CD4-positive, alpha-beta memory T cell (primary cell): ENCODE measurements at regions of chr6 and their contacts with region 1.

Region 1: DNA sequence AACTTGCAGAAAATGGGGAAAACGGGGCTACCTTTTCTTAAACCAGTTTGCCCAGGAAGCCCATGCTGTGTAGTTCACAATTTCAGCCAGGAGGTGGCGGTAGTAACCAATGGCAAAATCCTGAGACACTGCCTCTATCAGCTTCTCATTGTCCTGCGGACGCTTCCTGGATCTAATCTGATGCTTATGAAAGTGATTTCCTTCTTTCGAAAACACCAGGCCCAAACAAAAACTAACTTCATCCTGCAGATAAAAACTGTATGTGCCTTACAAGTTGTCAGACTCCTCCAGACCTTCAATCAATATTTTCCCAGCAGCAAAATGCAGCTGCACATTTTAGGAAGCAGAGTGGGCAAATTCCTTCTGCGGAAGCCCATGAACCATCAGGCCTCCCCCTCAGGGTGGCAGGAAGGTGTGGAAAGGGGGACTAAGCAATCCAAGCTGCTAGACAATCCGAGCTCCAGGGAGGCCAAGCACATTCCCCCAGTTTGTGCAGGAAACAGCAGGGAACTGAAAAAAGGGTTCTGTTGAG is 88.5 kb downstream of the LY86 start:
- DNase-seq: peak; percentile 64 to 75 (median 68)
- H3K4me3 ChIP-seq: no peak overlapping the region
- H3K4me3 Mint-ChIP-seq: peak overlapping the region in 3 of 8 donors; percentile 27 to 50 (median 41)
- H3K27ac ChIP-seq: no peak overlapping the region
- H3K27ac Mint-ChIP-seq: peak overlapping the region in 5 of 7 donors; percentile 47 to 83 (median 53)
- H3K4me1 ChIP-seq: peaks cover 8% of the 10 kb centered on the region
- H3K4me1 Mint-ChIP-seq: peaks cover 5 to 11% (median 7%) of the 10 kb centered on the region in 4 donors
- H3K27me3 ChIP-seq: no peaks in the 10 kb centered on the region
- H3K27me3 Mint-ChIP-seq: peaks cover 1 to 2% of the 10 kb centered on the region in 2 donors

Region 2: DNA sequence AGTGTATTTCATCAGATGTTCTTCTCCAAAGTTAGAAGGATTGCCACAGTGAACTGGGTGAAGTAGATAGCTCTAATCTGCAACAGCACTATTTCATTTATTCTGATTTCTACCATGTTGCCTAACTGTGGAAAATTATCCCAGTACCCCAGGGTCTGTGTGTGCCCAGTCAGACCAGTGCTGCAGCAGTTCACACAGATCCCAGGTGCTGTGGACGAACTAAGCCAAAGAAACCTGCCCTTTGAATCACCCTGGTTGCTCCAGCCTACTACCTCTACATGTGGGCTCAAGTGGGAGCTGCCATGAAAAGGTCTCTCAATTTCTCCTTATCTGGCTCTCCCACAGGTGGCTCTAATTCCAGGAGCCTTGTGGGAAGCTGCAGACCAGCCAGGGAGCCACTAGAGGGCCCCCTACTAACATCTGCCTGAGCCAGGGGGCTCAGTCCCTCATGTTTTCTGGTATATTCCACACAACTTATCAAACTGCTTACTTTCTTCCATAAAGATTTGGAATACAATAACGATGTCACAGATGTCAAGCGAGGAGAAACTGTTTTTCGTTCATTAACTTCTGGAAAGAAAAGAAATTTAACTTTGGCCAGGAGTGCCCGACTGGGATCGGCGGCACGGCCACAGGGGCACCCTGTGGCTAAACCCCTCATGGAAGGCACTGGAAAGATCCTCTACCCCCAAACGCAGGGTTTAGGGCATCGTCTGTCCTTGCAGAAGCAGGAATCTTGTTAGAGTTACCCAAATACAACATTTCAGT is 120.1 kb before region 1 on chr6:
- CTCF ChIA-PET with region 1: interaction called, 5 read pairs
- POLR2A ChIA-PET with region 1: no interaction called
- intact Hi-C with region 1: loop called (anchors 2 kb)
- DNase-seq: peak; percentile 26 to 53 (median 44)
- H3K4me3 ChIP-seq: no peak overlapping the region
- H3K4me3 Mint-ChIP-seq: no peak overlapping the region
- H3K27ac ChIP-seq: no peak overlapping the region
- H3K27ac Mint-ChIP-seq: peak overlapping the region in 3 of 7 donors; percentile 26 to 67 (median 34)
- H3K4me1 ChIP-seq: no peaks in the 10 kb centered on the region
- H3K4me1 Mint-ChIP-seq: peaks cover 1 to 6% (median 4%) of the 10 kb centered on the region in 4 donors
- H3K27me3 ChIP-seq: no peaks in the 10 kb centered on the region
- H3K27me3 Mint-ChIP-seq: peaks cover 1 to 4% of the 10 kb centered on the region in 2 donors

Region 3: DNA sequence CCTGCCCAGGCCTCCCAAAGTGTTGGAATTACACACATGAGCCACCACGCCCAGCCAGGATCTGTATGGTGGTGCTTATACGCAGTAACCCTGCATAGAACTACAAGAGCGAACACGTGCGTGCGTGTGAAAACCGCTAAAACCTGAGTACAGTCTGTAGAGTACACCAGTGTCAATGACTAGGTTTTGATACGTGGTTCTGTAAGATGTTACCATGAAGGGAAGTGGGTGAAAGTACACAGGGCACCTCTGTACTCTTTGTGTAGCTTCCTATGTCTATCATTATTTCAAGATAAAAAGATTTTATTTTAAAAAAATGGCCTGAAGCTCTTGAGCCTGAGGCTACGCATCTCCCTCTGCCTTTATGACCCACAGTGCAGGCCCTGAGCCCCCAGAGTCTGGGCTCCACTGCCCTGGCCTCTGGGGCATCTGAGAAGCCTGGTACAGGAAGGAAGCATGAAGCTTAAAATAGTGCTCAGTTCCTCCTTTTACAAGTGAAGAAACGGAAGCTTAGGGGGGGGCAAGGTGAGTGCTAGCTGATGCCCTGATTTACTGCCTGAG is 66.9 kb before region 1 on chr6:
- CTCF ChIA-PET with region 1: interaction called, 3 read pairs
- POLR2A ChIA-PET with region 1: interaction called, 5 read pairs
- intact Hi-C with region 1: loop called (anchors 1 kb)
- DNase-seq: peak; percentile 61 to 72 (median 64)
- H3K4me3 ChIP-seq: no peak overlapping the region
- H3K4me3 Mint-ChIP-seq: peak overlapping the region in 7 of 8 donors; percentile 53 to 73 (median 61)
- H3K27ac ChIP-seq: peak overlapping the region; percentile 15
- H3K27ac Mint-ChIP-seq: peak overlapping the region; percentile 81 to 98 (median 95)
- H3K4me1 ChIP-seq: peaks cover 67% of the 10 kb centered on the region
- H3K4me1 Mint-ChIP-seq: peaks cover 42 to 74% (median 57%) of the 10 kb centered on the region in 4 donors
- H3K27me3 ChIP-seq: no peaks in the 10 kb centered on the region
- H3K27me3 Mint-ChIP-seq: no peaks in the 10 kb centered on the region

Region 4: GRCh38 chr6:6661684-6662083 is 15.3 kb before region 1 on chr6:
- CTCF ChIA-PET with region 1: interaction called, 17 read pairs
- POLR2A ChIA-PET with region 1: no interaction called
- intact Hi-C with region 1: no loop called
- DNase-seq: no peak
- H3K4me3 ChIP-seq: no peak overlapping the region
- H3K4me3 Mint-ChIP-seq: no peak overlapping the region
- H3K27ac ChIP-seq: no peak overlapping the region
- H3K27ac Mint-ChIP-seq: no peak overlapping the region
- H3K4me1 ChIP-seq: peaks cover 24% of the 10 kb centered on the region
- H3K4me1 Mint-ChIP-seq: peaks cover 0 to 38% (median 27%) of the 10 kb centered on the region in 4 donors
- H3K27me3 ChIP-seq: no peaks in the 10 kb centered on the region
- H3K27me3 Mint-ChIP-seq: peaks cover 3 to 7% of the 10 kb centered on the region in 2 donors

Region 5: DNA sequence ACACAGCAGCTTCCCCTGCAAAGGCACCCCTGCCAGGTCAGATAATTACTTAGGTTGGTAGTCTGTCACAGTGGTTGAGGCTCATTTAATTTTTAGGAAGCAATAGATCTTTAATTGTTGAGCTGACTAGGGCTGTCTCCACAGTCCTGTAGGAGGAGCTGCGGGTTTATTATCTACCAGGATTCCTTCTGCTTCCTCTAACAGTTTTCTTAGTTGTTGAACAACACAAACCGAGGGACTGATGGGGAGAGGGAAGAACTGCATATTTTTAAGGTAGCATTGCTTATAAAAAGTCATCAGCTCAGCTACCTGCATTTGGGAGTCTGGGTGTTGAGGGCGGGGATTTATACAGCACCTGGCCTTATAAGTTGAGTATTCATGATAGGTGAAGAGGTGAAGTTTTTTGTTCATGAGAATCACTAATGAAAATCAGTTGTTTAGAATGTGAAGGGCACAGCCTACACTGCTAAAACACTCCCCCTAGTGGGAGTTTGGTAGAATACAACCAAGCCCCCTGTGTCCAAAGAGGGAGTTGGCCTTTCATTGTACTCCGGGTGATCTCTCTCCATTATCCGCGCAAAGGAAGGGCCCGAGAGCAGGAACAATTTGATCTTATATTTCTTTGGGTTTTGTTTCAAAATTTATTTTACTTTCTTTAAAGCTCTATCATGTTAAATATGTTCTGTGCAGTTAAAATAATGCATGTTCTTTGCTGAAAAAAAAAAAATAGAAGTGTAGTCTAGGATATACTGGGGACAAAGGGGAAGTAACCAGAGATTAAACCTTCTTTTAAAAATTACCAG is 566.4 kb after region 1 on chr6:
- CTCF ChIA-PET with region 1: interaction called, 55 read pairs
- POLR2A ChIA-PET with region 1: interaction called, 3 read pairs
- intact Hi-C with region 1: loop called (anchors 1 kb)
- DNase-seq: peak; percentile 58 to 69 (median 61)
- H3K4me3 ChIP-seq: no peak overlapping the region
- H3K4me3 Mint-ChIP-seq: no peak overlapping the region
- H3K27ac ChIP-seq: no peak overlapping the region
- H3K27ac Mint-ChIP-seq: peak overlapping the region; percentile 7 to 74 (median 37)
- H3K4me1 ChIP-seq: peaks cover 6% of the 10 kb centered on the region
- H3K4me1 Mint-ChIP-seq: peaks cover 8 to 21% (median 9%) of the 10 kb centered on the region in 4 donors
- H3K27me3 ChIP-seq: no peaks in the 10 kb centered on the region
- H3K27me3 Mint-ChIP-seq: no peaks in the 10 kb centered on the region

Region 6: DNA sequence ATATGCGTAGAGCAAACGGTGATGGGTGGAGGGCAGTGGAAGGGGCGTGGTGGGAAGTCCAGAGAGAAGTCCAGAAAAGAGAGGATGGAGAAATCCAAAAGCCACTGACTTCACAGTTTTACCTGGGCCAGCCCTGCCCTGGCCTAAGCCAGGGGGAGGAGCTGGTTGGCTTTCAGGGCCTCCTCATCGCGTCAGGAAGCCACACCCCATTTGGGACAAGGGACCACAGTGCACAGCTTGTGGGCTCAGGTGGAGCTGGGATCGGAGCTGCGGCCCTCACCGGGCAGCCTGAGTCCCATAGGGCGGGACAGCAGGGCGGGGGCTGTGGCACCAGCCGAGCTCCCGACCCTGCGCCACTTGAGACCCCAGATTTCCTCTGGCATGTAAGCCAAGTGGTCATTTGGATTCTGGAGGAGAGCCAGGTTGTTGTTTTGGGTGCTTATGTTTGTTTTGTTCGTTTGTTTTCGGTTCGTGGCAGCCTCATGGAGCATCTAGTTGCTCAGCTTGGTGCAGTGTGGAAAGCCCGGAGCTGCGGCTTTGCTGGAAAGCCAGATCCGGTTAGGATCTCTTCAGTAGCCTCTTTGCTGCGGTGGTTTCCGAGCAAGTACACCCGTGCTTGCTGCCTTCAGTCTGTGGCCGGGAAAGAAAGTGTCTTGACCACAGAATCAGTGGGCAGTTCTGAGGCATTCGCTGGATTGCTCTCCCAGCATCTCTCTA is 754.9 kb after region 1 on chr6:
- CTCF ChIA-PET with region 1: no interaction called
- POLR2A ChIA-PET with region 1: no interaction called
- intact Hi-C with region 1: no loop called
- DNase-seq: no peak
- H3K4me3 ChIP-seq: no peak overlapping the region
- H3K4me3 Mint-ChIP-seq: no peak overlapping the region
- H3K27ac ChIP-seq: no peak overlapping the region
- H3K27ac Mint-ChIP-seq: no peak overlapping the region
- H3K4me1 ChIP-seq: no peaks in the 10 kb centered on the region
- H3K4me1 Mint-ChIP-seq: peaks cover 0 to 1% (median 0%) of the 10 kb centered on the region in 4 donors
- H3K27me3 ChIP-seq: no peaks in the 10 kb centered on the region
- H3K27me3 Mint-ChIP-seq: peaks cover 5% of the 10 kb centered on the region in 2 donors

Region 7: GRCh38 chr6:7615611-7616383 is 938.8 kb after region 1 on chr6:
- CTCF ChIA-PET with region 1: interaction called, 4 read pairs
- POLR2A ChIA-PET with region 1: no interaction called
- intact Hi-C with region 1: loop called (anchors 1 kb)
- DNase-seq: peak in 4 of 5 donors; percentile 34 to 43 (median 40)
- H3K4me3 ChIP-seq: no peak overlapping the region
- H3K4me3 Mint-ChIP-seq: peak overlapping the region; percentile 1 to 63 (median 16)
- H3K27ac ChIP-seq: no peak overlapping the region
- H3K27ac Mint-ChIP-seq: peak overlapping the region in 2 of 7 donors; percentile 13 to 71
- H3K4me1 ChIP-seq: peaks cover 4% of the 10 kb centered on the region
- H3K4me1 Mint-ChIP-seq: peaks cover 5 to 7% (median 6%) of the 10 kb centered on the region in 4 donors
- H3K27me3 ChIP-seq: no peaks in the 10 kb centered on the region
- H3K27me3 Mint-ChIP-seq: peaks cover 0 to 3% of the 10 kb centered on the region in 2 donors

Region 8: GRCh38 chr6:8006208-8006607 is 1329.2 kb after region 1 on chr6:
- CTCF ChIA-PET with region 1: no interaction called
- POLR2A ChIA-PET with region 1: no interaction called
- intact Hi-C with region 1: loop called (anchors 5 kb)
- DNase-seq: peak in 1 of 5 donors; percentile 5
- H3K4me3 ChIP-seq: no peak overlapping the region
- H3K4me3 Mint-ChIP-seq: no peak overlapping the region
- H3K27ac ChIP-seq: no peak overlapping the region
- H3K27ac Mint-ChIP-seq: no peak overlapping the region
- H3K4me1 ChIP-seq: no peaks in the 10 kb centered on the region
- H3K4me1 Mint-ChIP-seq: no peaks in the 10 kb centered on the region
- H3K27me3 ChIP-seq: no peaks in the 10 kb centered on the region
- H3K27me3 Mint-ChIP-seq: no peaks in the 10 kb centered on the region